Activated CD4-positive, alpha-beta memory T cell treated with anti-CD3 and anti-CD28 coated beads for 36 hours (primary cell): ENCODE measurements at regions of chr7 and their contacts with region 1.

Region 1: GRCh38 chr7:135645296-135645904 is 16.9 kb upstream of the STMP1 start:
- DNase-seq: no peak
- H3K4me3 Mint-ChIP-seq: no peak overlapping the region
- H3K27ac Mint-ChIP-seq: no peak overlapping the region
- H3K4me1 Mint-ChIP-seq: no peaks in the 10 kb centered on the region
- H3K27me3 Mint-ChIP-seq: no peaks in the 10 kb centered on the region

Region 2: GRCh38 chr7:135274495-135275268 is 370.7 kb before region 1 on chr7:
- CTCF ChIA-PET with region 1: interaction called, 61 read pairs
- POLR2A ChIA-PET with region 1: no interaction called
- intact Hi-C with region 1: no loop called
- DNase-seq: peak; percentile 84
- H3K4me3 Mint-ChIP-seq: no peak overlapping the region
- H3K27ac Mint-ChIP-seq: no peak overlapping the region
- H3K4me1 Mint-ChIP-seq: no peaks in the 10 kb centered on the region
- H3K27me3 Mint-ChIP-seq: no peaks in the 10 kb centered on the region

Region 3: GRCh38 chr7:135509903-135510602 is 135.3 kb before region 1 on chr7 and contains the start of gene CNOT4:
- CTCF ChIA-PET with region 1: interaction called, 9 read pairs
- POLR2A ChIA-PET with region 1: no interaction called
- intact Hi-C with region 1: loop called (anchors 1 kb)
- DNase-seq: peak; percentile 98
- H3K4me3 Mint-ChIP-seq: no peak within 1 kb of the TSS
- H3K27ac Mint-ChIP-seq: no peak within 1 kb of the TSS
- H3K4me1 Mint-ChIP-seq: peaks cover 9% of the 10 kb centered on the region
- H3K27me3 Mint-ChIP-seq: no peaks in the 10 kb centered on the region
- total RNA-seq, gene CNOT4: 16.1 to 17.4 TPM

Region 4: DNA sequence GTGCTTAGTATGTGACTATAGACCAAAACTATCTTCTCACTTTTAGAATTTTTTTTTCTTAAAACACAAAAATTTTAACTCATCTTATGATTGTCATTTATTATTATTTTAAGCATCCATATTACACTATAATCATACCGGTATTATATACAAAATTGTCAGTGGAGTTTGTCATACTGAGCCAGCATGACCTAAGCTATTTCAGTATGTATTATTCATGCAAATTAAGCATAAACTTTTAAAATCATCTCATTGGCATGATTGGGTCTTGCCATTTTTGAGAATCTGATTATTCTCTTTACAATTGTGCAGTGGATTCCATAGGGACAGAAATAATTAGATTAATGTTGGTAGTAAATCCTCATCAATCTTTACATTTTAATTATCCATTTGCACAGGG is 29.3 kb before region 1 on chr7:
- CTCF ChIA-PET with region 1: interaction called, 20 read pairs
- POLR2A ChIA-PET with region 1: no interaction called
- intact Hi-C with region 1: loop called (anchors 2 kb)
- DNase-seq: no peak
- H3K4me3 Mint-ChIP-seq: no peak overlapping the region
- H3K27ac Mint-ChIP-seq: no peak overlapping the region
- H3K4me1 Mint-ChIP-seq: no peaks in the 10 kb centered on the region
- H3K27me3 Mint-ChIP-seq: no peaks in the 10 kb centered on the region

Region 5: DNA sequence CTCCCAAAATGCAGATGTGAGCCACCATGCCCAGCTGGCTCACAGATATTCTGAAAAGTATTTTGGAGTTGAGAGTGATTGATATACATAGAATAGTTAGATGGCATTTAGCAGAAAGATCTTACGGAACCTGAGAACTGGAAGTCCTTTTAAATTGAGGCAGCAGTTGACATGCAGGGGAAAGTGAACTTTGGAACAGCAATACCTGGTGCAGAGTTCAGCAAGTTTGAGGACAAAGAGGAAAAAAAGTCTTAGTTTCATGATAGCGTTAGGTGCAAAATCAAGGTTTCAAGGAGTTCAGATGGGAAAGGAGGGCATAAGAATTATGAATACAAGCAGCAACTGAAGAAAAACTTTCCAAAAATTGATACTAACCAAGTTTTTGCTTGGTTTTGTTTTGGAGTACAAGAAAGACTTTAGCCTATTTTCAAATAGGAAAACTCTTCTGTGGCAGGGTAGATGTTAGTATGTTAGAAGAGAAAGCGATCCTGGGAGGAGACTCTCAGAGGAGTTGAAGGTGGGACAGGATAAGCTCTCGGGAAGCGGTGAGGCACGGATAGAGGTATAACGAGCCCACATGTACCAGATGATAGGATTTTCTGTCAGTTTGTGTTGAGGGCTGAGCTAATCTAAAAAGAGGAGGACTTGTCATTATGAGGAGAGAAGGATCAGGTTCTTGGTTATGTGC is 11.1 kb before region 1 on chr7:
- CTCF ChIA-PET with region 1: interaction called, 67 read pairs
- POLR2A ChIA-PET with region 1: no interaction called
- intact Hi-C with region 1: no loop called
- DNase-seq: no peak
- H3K4me3 Mint-ChIP-seq: no peak overlapping the region
- H3K27ac Mint-ChIP-seq: no peak overlapping the region
- H3K4me1 Mint-ChIP-seq: no peaks in the 10 kb centered on the region
- H3K27me3 Mint-ChIP-seq: no peaks in the 10 kb centered on the region